Activated CD4-positive, alpha-beta memory T cell treated with anti-CD3 and anti-CD28 coated beads for 36 hours (primary cell): ENCODE measurements at regions of chr18 and their contacts with region 1.

Region 1: DNA sequence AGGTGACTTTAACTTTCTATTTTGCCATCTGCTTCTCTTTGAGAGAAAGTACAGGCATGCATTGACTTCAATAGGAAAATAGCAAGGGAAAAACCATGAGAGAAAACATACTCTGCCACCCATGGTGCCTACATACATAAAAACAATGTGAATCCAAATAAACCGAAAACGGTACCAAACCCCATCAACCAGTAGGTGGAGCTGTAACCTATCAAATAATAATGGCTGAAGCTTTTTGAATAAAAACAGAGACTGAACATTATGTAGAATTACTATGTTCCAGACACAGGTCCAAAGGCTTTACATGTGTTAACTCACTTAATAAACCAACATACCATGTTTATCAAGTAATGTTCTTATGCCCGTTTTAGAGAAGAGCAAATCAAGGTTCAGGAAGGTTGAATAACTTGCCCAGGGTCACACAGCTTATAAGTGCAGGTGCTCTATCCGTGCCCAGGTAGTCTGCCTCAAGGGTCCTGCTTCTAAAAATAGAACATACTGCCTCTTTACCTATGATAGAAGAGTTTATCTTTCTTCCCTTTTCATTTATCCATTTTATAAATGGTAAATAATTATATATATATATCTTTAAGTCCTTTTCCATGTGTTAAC is 293.9 kb upstream of the SYT4 start:
- DNase-seq: no peak
- H3K4me3 Mint-ChIP-seq: no peak overlapping the region
- H3K27ac Mint-ChIP-seq: no peak overlapping the region
- H3K4me1 Mint-ChIP-seq: no peaks in the 10 kb centered on the region
- H3K27me3 Mint-ChIP-seq: no peaks in the 10 kb centered on the region

Region 2: DNA sequence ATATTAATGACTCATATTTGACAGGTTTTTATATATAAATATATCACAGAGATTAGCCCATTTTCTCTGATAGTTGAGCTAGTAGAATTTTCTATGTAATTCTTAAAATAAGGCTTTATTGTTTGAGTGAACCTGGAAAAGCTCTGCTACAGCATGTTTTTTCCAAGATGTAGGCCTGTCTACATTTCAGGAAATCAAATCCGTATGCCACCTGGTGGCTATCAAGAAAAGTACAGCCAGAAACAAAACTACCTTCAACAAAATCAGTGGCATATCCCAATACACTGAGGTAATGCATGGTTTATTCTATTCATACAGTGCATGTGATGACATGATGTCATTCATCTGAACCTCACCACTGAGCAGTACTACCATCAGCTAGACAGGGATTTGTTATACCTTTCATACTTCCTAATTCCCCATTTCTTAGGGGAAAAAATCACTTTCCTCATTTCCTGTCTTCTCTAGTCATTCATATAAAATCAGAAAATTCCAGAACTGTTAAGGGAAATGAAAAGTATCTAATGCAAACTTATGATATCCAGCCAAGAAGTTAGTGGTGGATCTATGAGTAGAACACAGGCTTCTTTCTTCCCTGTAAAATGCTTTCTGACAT is 16.5 kb after region 1 on chr18:
- CTCF ChIA-PET with region 1: interaction called, 87 read pairs
- POLR2A ChIA-PET with region 1: no interaction called
- intact Hi-C with region 1: loop called (anchors 1 kb)
- DNase-seq: no peak
- H3K4me3 Mint-ChIP-seq: no peak overlapping the region
- H3K27ac Mint-ChIP-seq: no peak overlapping the region
- H3K4me1 Mint-ChIP-seq: no peaks in the 10 kb centered on the region
- H3K27me3 Mint-ChIP-seq: no peaks in the 10 kb centered on the region

Region 3: DNA sequence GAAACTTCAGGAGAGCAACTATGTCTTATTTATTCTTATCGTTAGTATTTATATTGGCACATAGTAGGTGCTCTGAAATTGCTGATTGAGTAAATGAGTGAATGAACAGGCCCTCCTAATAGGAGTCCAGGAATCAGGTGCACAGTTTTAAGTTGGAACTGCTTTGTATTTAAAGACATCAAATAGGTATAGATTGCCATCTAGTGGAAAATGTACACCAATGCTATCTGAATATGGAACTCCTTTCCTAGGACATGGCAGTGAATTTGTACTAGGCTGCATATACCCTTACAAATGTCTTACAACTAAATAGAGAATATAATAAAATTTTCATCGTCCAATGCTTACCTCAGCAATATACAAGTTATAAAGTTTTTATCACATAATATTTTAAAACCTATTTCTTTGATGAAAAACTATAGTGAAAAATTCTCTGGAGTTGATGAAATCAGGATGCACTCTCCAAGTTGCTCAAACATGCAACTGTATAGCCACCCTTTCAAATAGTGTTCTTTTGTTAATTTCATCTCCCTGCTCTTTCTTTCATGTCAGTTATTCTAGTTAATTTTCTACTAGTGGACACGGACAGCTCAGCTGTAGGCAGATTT is 25.0 kb after region 1 on chr18:
- CTCF ChIA-PET with region 1: interaction called, 87 read pairs
- POLR2A ChIA-PET with region 1: no interaction called
- intact Hi-C with region 1: no loop called
- DNase-seq: no peak
- H3K4me3 Mint-ChIP-seq: no peak overlapping the region
- H3K27ac Mint-ChIP-seq: no peak overlapping the region
- H3K4me1 Mint-ChIP-seq: no peaks in the 10 kb centered on the region
- H3K27me3 Mint-ChIP-seq: no peaks in the 10 kb centered on the region